ENCODE measurements at regions of chr10 and their contacts with region 1.

Region 1: DNA sequence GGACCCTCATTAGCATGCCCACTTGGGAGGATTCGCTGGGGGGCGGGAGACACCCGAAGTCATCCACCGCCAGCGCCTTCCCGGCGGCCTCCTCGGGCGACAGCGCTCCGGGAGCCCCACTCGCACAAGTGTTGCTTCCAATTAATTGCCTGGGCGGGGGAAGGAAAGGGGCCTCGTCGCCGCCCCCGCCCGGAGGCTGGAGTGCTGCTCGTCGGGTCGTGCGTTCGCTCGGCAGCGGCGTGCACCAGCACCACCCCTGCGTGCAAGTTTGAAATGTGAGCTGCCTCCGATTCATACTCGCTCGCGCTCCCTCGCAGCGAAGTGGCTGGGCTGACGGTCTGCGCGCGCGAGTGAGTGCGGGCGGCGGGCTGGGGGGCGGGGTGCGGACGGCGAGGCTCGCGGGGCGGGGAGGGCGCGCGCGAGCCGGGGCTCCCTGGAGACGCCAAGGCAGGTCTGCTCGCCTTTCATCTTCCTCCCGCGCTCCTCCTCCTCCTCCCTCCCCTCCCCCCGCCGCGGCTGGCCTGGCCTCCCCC is 104.6 kb upstream of the PPIF start:
- DNase-seq: peak in 41 of 42 donors; percentile 51 to 89 (median 73)

Region 2: DNA sequence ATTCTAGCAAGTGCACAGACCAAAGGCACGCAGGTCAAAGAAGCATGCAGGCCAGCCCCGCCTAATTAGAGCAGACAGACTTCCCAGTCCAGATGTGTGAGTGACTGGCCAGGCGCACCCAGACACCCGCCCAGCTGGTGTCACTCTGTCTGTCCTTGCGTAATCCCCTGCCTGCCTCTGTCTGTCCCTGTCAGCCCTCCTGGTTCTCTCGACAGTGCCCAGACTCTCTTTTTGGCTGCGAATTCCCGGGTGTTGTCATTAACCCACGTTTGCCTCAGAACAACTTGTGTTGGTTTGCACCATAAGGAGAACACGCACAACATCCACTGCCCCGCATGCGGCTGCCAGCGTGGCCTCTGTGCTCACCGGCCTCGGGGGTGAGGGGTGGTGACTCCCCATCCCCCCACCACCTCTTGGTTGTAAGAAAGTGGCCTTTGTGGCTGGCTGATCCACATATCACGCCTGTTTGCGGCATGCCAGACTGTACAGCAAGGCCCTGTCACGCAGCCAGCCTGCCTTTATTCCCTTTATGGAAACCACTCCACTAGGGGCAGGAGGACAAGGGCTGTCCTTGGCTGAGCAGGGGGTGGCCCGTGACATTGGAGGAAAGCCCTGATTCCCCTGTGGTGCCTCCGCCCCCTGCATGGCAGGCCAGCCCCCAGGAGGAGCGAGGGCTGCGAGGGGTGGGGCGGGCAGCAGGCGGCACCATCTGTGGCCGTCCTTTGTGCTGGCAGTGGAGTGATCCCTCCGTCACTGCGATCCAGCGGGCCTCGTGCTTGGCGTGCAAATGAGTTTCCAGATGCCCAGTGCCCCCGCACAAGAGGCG is 31.8 kb after region 1 on chr10:
- intact Hi-C with region 1: loop called (anchors 2 kb)
- DNase-seq: peak; percentile 86 to 98 (median 94)

Region 3: DNA sequence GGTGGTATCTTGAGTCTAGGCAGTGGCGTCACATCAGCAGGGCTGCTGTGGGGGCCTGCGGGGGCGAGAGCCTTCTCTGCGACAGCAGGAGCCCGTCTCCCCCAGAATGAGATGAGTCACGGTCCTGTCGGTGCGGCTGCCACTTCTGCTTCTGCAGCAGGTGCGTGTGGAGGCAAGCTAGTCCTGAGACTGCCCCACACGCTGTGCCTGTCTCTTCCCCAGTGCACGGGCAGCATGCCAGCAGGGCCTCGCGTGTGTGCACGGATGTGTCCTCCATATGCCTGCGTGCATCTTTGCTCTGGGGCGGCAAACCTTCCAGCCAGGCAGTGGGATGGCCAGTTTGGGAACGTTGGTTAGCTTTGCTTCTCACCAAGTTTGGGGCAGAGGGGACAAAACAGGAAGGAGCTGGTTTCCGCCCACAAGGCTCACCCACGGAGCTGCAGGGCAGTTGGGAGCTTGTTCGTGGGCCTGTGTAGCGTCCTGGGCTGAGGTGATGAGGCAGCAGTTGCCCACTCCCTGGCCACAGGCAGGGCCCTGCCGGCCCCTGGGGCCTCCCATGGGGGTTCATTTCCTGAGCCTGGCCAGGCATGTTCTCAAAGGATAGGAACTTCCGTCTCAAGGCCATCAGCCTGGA is 43.7 kb after region 1 on chr10:
- intact Hi-C with region 1: loop called (anchors 5 kb)
- DNase-seq: peak; percentile 59 to 95 (median 82)

Measured in head of caudate nucleus (tissue), 42 donors.